Sciatic nerve (tissue), 2 donors: ENCODE measurements at regions of chr2 and their contacts with region 1.

Region 1: GRCh38 chr2:70608373-70608772 is 54.7 kb upstream of the TGFA start:
- DNase-seq: no peak
- ATAC-seq: no peak

Region 2: GRCh38 chr2:70321370-70321769 is 287.0 kb before region 1 on chr2:
- intact Hi-C with region 1: no loop called
- DNase-seq: no peak
- ATAC-seq: no peak

Region 3: GRCh38 chr2:70523996-70524965 is 84.1 kb before region 1 on chr2:
- intact Hi-C with region 1: no loop called
- DNase-seq: no peak
- ATAC-seq: no peak

Region 4: DNA sequence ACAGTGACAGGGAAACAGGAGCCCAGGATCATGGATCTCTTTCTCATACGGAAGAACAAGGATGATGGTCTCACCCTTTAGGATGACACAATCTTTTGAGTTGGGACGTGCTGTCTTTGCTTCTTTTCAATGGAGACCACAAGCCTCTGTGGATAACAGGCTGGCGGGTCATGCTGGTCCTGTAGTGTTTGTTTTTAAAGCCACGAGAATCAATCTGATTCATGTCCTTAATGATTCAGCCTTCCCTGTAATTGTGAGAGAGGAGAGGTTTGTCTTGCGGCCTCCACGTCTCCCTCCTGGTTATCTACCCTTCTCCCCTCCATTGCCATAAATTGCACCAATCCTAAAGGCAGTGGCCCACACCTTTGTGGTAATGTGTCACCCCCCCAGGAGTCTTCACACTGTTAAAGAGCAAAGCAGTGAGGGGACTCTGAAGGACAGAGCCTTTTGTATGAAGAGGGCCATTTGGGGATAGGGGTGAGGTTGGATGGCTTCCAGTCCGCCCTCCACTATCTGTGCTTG is 33.0 kb after region 1 on chr2:
- intact Hi-C with region 1: loop called (anchors 2 kb)
- DNase-seq: no peak
- ATAC-seq: no peak

Region 5: DNA sequence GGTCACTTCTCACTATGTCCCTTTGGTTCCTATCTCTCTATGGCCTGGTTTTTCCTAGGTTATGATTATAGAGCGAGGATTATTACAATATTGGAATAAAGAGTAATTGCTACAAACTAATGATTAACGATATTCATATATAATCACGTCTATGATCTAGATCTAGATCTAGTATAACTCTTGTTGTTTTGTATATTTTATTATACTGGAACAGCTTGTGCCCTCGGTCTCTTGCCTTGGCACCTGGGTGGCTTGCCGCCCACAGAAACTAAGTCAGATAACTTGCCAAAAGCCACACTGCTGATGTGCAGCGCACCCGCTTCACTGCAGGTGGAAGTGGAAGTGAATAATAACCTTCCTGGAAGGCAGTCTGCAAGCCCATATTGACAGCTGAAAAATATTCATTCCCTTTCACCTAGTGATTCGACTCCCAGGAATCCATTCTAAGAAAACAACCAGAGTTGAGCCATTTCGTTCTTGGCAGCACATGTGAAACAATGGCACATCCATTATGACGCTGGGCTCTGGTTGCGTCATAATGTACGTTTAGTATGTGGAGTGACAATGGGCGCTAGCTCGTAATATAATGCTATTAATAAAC is 369.3 kb after region 1 on chr2:
- intact Hi-C with region 1: no loop called
- DNase-seq: no peak
- ATAC-seq: peak; percentile 40